SK-N-SH (cell line): ENCODE measurements at regions of chr20 and their contacts with region 1.

Region 1: DNA sequence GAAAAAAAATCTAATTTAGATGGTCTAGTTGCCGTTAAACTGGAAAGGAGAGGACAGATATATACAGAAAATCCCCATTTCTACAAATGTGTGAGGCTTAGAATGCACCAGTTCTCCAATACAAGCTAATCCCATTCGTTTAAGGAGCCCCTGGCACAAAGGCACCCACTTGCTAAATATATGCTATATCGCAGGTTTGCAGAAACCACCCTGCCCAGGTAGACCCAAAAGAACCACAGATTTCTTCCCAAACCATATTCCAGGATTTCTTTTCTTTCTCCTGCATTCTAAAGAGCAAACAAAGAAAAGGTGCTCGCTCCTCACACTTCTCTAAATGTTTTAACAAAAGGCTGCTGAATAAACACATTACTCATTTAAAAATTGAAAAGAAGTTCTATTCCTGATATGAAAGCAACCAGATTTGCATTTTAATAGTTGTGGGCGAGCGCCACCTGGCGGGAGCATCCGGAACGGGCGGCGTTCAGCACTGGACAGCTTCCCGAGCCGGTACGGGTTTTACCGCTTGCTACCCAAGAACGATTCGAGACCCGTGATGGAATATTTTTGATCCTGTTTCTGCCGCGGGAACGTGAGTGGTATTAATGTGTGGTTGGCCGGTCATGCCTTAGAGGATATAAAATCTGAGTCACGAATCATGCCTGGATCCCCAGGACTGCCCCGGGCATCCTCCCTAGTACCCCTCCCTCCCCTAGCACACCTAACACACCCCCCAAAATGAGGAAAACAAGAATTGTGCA is 2.1 kb downstream of the PTPRT start:
- DNase-seq: peak; percentile 86
- H3K4me3 ChIP-seq: peak overlapping the region in 1 of 2 experiments; percentile 43; a peak in 2 of 4 replicates
- H3K27ac ChIP-seq: no peak overlapping the region
- H3K4me1 ChIP-seq: peaks cover 0 to 6% of the 10 kb centered on the region in 2 experiments; a peak in 1 of 4 replicates
- H3K27me3 ChIP-seq: no peaks in the 10 kb centered on the region
- CTCF ChIP-seq: peak; percentile 96
- EP300 ChIP-seq: no peak
- RAD21 ChIP-seq: peak; percentile 87

Region 2: GRCh38 chr20:41889126-41889870 is 1298.4 kb before region 1 on chr20:
- CTCF ChIA-PET with region 1: interaction called, 20 read pairs
- POLR2A ChIA-PET with region 1: no interaction called
- DNase-seq: peak; percentile 47
- H3K4me3 ChIP-seq: no peak overlapping the region
- H3K27ac ChIP-seq: no peak overlapping the region
- H3K4me1 ChIP-seq: no peaks in the 10 kb centered on the region
- H3K27me3 ChIP-seq: no peaks in the 10 kb centered on the region
- CTCF ChIP-seq: no peak
- EP300 ChIP-seq: no peak
- RAD21 ChIP-seq: peak; percentile 77

Region 3: GRCh38 chr20:41955999-41956705 is 1231.5 kb before region 1 on chr20:
- CTCF ChIA-PET with region 1: interaction called, 11 read pairs
- POLR2A ChIA-PET with region 1: no interaction called
- DNase-seq: peak; percentile 31
- H3K4me3 ChIP-seq: peak overlapping the region in 1 of 2 experiments; percentile 51; a peak in 1 of 4 replicates
- H3K27ac ChIP-seq: no peak overlapping the region
- H3K4me1 ChIP-seq: peaks cover 0 to 2% of the 10 kb centered on the region in 2 experiments; a peak in 1 of 4 replicates
- H3K27me3 ChIP-seq: no peaks in the 10 kb centered on the region
- CTCF ChIP-seq: peak; percentile 13; the same call in 1 of the 2 replicates
- EP300 ChIP-seq: no peak
- RAD21 ChIP-seq: peak; percentile 87

Region 4: GRCh38 chr20:42204203-42204942 is 983.3 kb before region 1 on chr20:
- CTCF ChIA-PET with region 1: interaction called, 10 read pairs
- POLR2A ChIA-PET with region 1: no interaction called
- DNase-seq: peak; percentile 21
- H3K4me3 ChIP-seq: no peak overlapping the region
- H3K27ac ChIP-seq: no peak overlapping the region
- H3K4me1 ChIP-seq: no peaks in the 10 kb centered on the region
- H3K27me3 ChIP-seq: no peaks in the 10 kb centered on the region
- CTCF ChIP-seq: no peak
- EP300 ChIP-seq: no peak
- RAD21 ChIP-seq: peak; percentile 70

Region 5: DNA sequence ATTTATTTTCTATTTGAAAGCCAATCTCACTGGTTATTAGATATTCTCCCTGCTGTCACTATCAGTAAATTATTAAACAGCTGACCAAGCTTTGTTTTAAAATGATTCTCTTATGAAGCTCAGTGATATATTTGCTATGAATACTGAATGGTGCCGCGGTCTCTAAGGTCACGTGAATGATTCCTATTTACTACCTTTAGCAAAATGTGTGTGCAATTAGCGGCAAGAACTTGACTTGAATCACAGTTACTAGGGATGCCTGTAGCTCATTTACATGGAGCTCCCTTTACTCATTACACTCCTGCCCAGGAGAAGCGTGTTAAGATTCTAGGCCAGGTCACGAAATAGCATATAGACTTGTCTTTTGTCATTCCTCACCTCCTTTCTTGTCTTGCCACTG is 14.4 kb after region 1 on chr20:
- CTCF ChIA-PET with region 1: interaction called, 12 read pairs
- POLR2A ChIA-PET with region 1: no interaction called
- DNase-seq: no peak
- H3K4me3 ChIP-seq: no peak overlapping the region
- H3K27ac ChIP-seq: no peak overlapping the region
- H3K4me1 ChIP-seq: no peaks in the 10 kb centered on the region
- H3K27me3 ChIP-seq: no peaks in the 10 kb centered on the region
- CTCF ChIP-seq: no peak
- EP300 ChIP-seq: no peak
- RAD21 ChIP-seq: no peak

Region 6: GRCh38 chr20:43408848-43409576 is 221.4 kb after region 1 on chr20:
- CTCF ChIA-PET with region 1: interaction called, 14 read pairs
- POLR2A ChIA-PET with region 1: no interaction called
- DNase-seq: peak; percentile 39
- H3K4me3 ChIP-seq: peak overlapping the region in 1 of 2 experiments; percentile 48; a peak in 1 of 4 replicates
- H3K27ac ChIP-seq: no peak overlapping the region
- H3K4me1 ChIP-seq: no peaks in the 10 kb centered on the region
- H3K27me3 ChIP-seq: no peaks in the 10 kb centered on the region
- CTCF ChIP-seq: peak; percentile 59
- EP300 ChIP-seq: no peak
- RAD21 ChIP-seq: peak; percentile 75

Region 7: DNA sequence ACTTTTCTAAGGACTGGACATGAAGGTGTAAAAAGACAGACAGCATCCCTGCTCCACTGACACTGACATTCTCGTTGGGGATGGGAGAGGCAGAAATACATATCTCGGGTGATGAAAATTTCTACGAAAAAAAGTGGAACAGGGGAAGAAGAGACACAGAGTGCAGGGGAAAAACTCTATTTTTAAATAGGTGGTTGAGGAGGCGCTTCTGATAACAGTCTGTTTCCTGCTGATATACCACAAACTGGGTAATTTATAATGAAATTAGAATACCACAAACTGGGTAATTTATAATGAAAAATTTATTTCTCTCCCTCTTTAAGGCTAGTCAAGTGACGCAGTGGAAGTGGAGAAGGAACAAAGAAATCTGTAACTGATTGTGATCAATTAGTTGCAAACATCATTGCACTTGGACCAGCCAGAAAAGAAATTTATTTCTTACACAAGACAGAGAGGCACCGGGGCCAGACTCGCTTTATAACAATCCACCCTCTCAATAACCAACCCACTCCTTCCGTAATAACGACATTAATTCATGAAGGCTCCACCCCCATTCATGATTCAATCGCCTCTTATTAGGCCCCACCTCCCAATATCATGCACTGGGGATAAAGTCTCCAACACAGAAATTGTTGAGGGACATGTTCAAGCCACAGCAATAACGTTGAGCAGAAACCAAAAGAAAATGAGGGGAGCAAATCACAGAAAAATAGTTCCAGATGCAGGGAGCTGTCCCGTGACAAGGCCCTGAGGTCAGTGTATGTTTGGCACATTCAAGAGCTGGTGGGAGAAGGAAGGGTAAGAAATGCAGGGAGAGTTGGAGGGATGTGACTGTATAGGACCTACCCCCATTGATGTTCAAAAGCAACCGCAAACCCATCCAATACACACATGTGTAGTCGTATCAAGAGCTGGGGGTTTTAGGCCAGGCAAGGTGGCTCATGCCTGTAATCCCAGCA is 263.5 kb after region 1 on chr20:
- CTCF ChIA-PET with region 1: no interaction called
- POLR2A ChIA-PET with region 1: no interaction called
- DNase-seq: no peak
- H3K4me3 ChIP-seq: no peak overlapping the region
- H3K27ac ChIP-seq: no peak overlapping the region
- H3K4me1 ChIP-seq: peaks cover 0 to 15% of the 10 kb centered on the region in 2 experiments; a peak in 1 of 4 replicates
- H3K27me3 ChIP-seq: no peaks in the 10 kb centered on the region
- CTCF ChIP-seq: no peak
- EP300 ChIP-seq: no peak
- RAD21 ChIP-seq: no peak